Ovary (tissue), 10 donors: ENCODE measurements at regions of chr19 and their contacts with region 1.

Region 1: DNA sequence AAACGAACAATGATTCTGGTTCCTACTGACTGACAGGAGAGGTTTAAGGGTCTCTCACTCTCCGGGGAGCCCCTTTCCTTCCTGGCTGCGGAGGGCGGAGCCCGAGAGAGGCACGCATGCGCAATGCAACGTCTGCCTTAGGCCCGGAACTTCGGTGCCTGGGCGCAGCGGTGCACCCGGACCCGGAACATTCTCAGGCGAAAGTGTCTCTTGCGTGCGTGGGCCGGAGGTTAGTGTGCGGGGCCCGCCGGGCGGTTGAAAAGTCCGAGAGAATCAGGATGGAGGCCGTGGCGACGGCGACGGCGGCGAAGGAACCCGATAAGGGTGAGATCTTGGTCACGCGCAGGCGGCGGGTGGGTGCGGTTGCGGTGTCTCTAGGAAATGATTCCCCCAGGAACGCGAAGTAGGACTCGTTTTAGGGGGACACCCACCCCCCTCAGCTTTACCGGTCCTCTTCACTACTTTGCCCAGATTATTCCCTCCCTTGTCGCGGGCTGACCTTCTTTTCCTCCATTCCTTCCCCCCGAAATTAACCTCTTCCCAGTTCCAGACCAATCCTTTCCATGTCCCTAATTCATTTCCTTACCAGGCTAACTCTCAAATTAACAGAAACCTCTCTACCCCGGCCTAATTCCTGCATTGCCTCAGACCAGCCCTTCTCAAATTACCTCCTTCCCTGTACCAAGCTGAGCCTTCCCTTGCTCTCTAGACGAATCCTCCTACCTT is at the start of gene CCDC97:
- DNase-seq: peak; percentile 87 to 93 (median 90)
- H3K4me3 ChIP-seq: peak within 1 kb of the TSS; percentile 83
- H3K27ac ChIP-seq: peak within 1 kb of the TSS; percentile 89 to 95
- H3K4me1 ChIP-seq: no peaks in the 10 kb centered on the region
- H3K27me3 ChIP-seq: no peaks in the 10 kb centered on the region
- CTCF ChIP-seq: peak in 1 of 3 donors; percentile 22
- EP300 ChIP-seq: no peak
- POLR2A ChIP-seq: peak; percentile 59
- total RNA-seq, gene CCDC97: 12.8 to 46.1 (median 32.1) TPM

Region 2: DNA sequence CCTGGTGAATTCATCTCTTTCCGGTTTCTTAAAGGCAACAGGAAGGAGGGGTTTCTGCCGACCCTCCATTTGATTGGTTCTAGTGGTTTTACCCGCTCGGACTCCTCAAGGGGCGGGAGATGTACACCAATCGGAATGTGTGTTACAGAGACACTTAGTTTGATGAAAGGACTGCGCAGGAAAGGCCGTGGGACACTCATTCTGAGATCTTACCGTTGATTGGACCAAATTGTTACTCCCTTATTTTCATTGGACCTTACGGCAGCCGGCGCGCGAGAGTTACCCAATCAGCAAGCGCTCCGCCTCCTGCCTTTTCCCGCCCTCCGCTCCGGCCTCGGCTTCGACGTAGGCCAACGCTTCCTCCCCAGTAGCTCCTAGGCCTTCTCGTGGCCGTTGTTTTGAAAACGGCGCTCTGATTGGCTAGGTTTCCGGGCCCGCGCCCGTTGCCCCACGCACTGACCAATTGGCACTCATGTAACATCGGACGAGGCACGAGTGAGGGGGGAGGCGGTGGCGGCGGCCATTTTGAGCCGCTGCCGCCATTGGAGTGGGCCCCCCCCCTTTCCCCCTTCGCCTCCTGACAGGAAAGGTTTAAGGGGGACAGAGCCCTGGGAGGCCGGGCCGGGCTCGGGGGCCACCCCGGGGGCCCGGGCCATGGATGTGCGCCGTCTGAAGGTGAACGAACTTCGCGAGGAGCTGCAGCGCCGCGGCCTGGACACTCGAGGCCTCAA is 46.2 kb before region 1 on chr19 and contains the start of gene HNRNPUL1:
- intact Hi-C with region 1: loop called in 2 of 4 experiments (anchors 5 kb)
- DNase-seq: peak; percentile 99 to 100 (median 99)
- H3K4me3 ChIP-seq: peak within 1 kb of the TSS; percentile 100
- H3K27ac ChIP-seq: peak within 1 kb of the TSS; percentile 95 to 96
- H3K4me1 ChIP-seq: peaks cover 3% of the 10 kb centered on the region
- H3K27me3 ChIP-seq: no peaks in the 10 kb centered on the region
- CTCF ChIP-seq: peak in 1 of 3 donors; percentile 56
- EP300 ChIP-seq: peak; percentile 3
- POLR2A ChIP-seq: peak; percentile 48
- total RNA-seq, gene HNRNPUL1: 102 to 259 (median 223) TPM

Region 3: GRCh38 chr19:41353466-41354342 is 43.5 kb after region 1 on chr19 and contains the start of gene TGFB1:
- intact Hi-C with region 1: loop called in 1 of 4 experiments (anchors 5 kb)
- DNase-seq: peak; percentile 80 to 89 (median 87)
- H3K4me3 ChIP-seq: peak within 1 kb of the TSS; percentile 60
- H3K27ac ChIP-seq: peak within 1 kb of the TSS; percentile 65 to 77
- H3K4me1 ChIP-seq: peaks cover 12% of the 10 kb centered on the region
- H3K27me3 ChIP-seq: no peaks in the 10 kb centered on the region
- CTCF ChIP-seq: peak; percentile 80 to 91 (median 89)
- EP300 ChIP-seq: no peak
- POLR2A ChIP-seq: peak; percentile 57
- total RNA-seq, gene TGFB1: 9.1 to 31.8 (median 22.1) TPM